Activated CD4-positive, alpha-beta T cell treated with anti-CD3 and anti-CD28 coated beads for 36 hours (primary cell): ENCODE measurements at regions of chr1 and their contacts with region 1.

Region 1: DNA sequence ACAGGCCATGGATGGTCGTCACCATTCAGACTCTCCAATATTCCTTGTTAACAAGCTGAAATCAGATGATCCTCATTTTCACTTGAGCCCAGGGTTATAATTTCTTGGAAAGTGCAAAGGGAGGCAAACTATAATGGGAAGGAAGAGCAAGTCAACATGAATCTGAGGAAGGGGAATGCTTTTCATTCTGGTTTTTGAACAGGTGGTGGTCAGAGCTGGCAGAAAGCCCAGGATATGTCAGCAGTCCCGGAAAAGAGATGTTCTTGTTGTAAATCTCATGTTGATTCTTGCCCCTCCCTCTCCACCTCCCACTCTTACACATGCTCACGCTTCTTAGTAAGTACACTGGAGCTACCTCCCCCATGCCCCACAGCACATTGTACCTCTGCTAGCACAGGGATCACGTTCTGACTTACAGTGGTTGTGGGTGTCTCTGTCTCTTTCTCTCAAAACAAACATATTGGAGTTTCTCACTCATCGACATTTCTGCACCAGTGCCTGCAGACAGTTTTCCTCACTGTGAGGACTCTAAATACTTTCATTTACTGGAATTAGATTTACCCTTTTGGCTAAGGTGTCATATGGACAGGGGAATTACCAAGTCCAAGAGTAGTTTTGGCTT is 77.6 kb downstream of the XCL2 start:
- DNase-seq: peak; percentile 77
- ATAC-seq: peak; percentile 93
- H3K4me3 Mint-ChIP-seq: no peak overlapping the region
- H3K27ac Mint-ChIP-seq: peak overlapping the region; percentile 72
- H3K4me1 Mint-ChIP-seq: peaks cover 56% of the 10 kb centered on the region
- H3K27me3 Mint-ChIP-seq: no peaks in the 10 kb centered on the region

Region 2: DNA sequence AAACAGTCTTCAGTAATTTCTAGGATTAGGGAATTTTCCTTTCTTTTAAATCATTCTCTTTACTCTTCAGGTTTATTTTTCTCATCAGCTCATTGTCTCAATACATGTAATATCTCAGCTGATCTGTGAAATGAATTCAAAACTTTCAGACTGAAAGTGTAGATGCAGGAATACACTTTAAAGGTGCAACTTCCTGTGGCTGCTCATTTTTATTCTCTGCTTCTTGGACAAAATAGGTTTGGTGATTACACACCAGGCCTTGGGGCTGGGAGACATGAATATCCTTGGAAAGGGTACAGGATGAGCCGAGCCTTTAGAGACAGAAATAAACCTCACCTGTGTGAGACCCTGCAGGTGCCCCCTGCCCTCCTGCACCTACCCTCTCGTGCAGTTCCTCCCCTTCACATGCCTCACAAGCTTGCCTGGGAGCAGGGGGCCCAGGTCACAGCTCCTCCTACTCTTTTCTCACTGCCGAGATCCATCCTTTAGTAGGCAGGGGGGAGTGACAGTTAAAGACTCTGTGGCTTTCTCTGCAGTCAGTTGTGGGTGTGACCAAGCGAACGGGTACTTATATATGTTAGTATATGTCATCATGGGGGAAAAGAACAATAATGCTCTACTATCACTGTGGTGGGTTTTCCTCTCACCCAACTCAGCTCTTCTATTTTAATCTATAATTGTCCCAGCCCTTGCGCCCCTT is 54.0 kb after region 1 on chr1:
- CTCF ChIA-PET with region 1: interaction called, 3 read pairs
- POLR2A ChIA-PET with region 1: no interaction called
- intact Hi-C with region 1: loop called in 1 of 2 experiments (anchors 5 kb)
- DNase-seq: peak; percentile 66
- ATAC-seq: peak; percentile 98
- H3K4me3 Mint-ChIP-seq: peak overlapping the region; percentile 47
- H3K27ac Mint-ChIP-seq: peak overlapping the region; percentile 79
- H3K4me1 Mint-ChIP-seq: peaks cover 47% of the 10 kb centered on the region
- H3K27me3 Mint-ChIP-seq: no peaks in the 10 kb centered on the region

Region 3: DNA sequence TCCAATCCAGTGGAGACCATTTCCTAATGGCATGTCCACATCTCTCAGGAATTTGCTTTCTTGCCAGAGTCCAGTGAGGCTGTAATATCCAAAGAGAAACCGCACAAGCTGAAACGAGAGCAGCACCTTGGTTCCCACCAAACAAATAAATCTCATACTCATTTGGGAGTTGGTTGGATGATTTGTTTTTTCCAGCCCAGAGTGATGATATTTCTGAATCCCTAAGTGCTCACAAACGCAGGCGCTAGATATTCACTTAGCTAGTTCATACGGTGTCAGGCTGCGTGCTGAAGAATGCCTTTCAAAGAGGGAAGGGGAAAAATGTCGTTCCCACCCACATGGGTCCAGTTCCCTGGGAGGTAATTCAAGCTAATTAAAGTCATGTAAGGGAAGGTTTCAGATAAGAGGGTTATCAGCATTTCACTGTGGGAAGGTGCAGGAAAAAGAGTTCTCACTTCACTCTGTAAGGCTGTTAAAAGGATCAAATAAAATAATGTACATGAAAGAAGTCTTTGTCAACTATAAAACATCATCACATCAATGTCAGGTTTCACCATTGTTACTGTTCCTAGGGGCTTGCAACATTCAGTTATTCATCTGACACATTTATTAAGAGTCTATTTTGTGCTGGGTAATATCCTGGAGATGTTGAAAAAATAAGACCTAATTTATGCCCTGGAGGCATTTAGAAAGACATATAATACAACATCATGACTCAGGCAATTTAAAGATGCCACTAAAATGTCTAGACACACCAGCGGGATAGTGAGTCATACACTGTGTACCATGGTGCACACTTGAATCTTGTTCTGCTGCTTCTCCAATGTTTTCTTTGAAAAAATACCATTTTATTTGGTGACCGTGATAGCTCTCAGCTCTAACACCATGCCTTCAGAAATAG is 243.5 kb after region 1 on chr1:
- CTCF ChIA-PET with region 1: no interaction called
- POLR2A ChIA-PET with region 1: no interaction called
- intact Hi-C with region 1: no loop called
- DNase-seq: no peak
- ATAC-seq: no peak
- H3K4me3 Mint-ChIP-seq: no peak overlapping the region
- H3K27ac Mint-ChIP-seq: no peak overlapping the region
- H3K4me1 Mint-ChIP-seq: no peaks in the 10 kb centered on the region
- H3K27me3 Mint-ChIP-seq: peaks cover 6% of the 10 kb centered on the region